Dendritic cell treated with granulocyte-macrophage colony-stimulating factor and Interleukin-4, amounts not matched to agents 40 ng/mL and 50 ng/mL, for 4 days (primary cell): ENCODE measurements at regions of chr21 and their contacts with region 1.

Region 1: DNA sequence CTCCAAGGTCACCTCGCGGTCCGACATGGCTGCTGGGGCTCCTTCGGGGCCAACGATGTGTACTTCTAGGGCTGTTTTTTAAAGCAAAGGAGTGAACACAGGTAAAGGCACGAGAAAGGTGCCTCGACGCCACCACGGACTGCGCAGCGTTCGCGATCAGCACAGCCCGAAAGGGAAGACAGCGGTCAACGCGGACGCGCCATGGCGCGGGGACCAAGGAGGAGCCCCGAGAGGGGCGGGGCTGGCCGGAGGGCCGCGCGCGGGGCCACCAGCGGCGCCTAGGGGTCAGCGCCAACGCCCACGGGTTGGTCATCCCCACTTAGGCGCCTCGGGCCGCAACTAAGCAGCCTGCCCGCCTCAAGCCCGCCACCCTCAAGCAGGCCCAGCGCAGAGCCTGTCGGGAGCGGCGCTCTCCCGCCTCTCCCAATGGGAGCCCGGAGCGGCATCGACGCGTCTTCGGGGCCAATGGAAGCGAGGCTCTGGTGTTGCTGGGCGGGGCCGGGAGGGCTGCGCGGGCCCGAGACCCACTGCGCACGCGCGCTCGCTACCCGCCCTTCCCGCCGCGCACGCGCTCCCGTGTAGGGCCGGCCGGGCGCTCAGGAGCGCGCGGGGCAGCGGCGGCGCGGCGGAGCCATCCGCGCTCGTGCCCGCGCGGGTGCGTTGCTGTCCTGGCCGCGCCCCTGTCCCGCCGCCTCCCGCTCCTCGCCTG is at the start of gene DIP2A:
- H3K4me3 Mint-ChIP-seq: peak within 1 kb of the TSS; percentile 90
- H3K27ac Mint-ChIP-seq: peak within 1 kb of the TSS; percentile 98
- H3K4me1 Mint-ChIP-seq: peaks cover 47% of the 10 kb centered on the region
- H3K27me3 Mint-ChIP-seq: no peaks in the 10 kb centered on the region

Region 2: DNA sequence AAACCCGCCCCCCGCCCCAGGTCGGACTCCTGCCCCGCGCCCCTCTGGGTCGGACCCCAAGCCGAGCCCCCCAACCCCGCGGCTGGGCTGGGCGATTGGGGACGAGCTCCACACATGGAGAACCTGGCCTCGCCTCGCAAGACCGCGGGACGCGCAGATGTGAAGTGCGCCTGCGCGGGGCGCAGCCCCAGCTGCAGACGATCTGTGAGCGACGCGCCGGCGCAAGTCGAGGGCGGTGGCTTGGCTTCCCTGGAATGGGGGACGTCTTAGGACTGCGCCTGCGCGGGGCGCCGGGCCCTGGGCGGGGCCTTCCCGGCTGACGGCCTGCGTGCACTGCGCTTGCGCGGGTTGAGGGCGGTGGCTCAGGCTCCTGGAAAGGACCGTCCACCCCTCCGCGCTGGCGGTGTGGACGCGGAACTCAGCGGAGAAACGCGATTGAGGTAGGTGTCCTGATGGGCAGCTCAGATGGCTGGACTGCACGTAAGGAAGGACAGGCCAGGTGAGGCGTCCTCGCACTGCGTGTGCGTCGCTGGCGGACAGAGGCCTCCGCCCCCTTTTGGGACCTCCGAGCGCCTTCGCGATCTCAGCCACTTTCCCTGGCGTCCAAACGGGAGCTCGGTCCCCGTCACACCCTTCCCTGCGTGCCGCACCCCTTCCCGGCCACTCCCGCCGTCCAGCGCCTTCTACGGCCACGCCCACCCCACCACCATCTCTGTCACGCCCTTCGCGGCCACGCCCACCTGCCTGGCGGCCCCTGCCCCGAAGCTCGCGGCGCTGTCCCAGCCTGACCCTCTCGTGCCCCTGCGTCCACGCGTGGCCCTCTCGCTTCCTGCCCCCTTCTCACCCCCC is 177.1 kb after region 1 on chr21 and contains the start of gene PRMT2:
- intact Hi-C with region 1: loop called (anchors 1 kb)
- H3K4me3 Mint-ChIP-seq: peak within 1 kb of the TSS; percentile 97
- H3K27ac Mint-ChIP-seq: peak within 1 kb of the TSS; percentile 95
- H3K4me1 Mint-ChIP-seq: peaks cover 42% of the 10 kb centered on the region
- H3K27me3 Mint-ChIP-seq: no peaks in the 10 kb centered on the region